ENCODE measurements at regions of chr2 and their contacts with region 1.

Region 1: GRCh38 chr2:54838585-54839035 is 115.1 kb downstream of the EML6 start:
- DNase-seq: peak; percentile 57
- CTCF ChIP-seq: peak; percentile 90

Region 2: DNA sequence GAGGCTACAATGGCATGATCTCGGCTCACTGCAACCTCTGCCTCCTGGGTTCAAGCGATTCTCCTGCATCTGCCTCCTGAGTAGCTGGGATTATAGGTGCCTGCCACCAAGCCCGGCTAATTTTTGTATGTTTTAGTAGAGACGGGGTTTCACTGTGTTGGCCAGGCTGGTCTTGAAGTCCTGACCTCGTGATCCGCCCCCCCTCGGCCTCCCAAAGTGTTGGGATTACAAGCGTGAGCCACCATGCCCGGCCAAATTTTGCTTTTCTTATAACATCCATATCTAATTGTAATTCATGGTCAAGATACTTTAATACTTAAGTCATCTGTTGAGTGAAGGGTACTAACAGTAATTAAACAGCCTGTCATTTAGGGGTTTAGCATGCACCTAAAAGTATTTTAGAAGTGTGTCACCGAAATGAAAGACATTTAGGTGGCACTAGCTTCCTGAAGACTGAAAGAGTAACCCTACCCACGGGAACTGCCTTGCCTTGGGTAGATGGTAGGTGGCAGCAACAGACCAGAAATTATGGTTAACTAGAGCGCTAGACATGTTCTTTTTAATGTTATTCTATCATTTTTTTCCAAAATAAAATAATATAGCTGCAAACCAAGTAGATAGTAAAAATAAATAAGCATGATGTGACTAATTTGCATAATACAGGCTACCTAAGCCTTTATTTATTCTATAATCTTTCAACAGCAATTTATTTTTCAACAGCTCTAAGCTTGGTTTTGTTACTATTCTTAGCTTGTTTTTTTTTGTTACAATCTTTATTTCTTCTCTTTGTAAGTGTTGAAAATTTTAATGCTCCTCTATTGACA is 731.8 kb before region 1 on chr2:
- CTCF ChIA-PET with region 1: interaction called, 10 read pairs
- POLR2A ChIA-PET with region 1: no interaction called
- DNase-seq: peak; percentile 42
- CTCF ChIP-seq: peak; percentile 66

Region 3: DNA sequence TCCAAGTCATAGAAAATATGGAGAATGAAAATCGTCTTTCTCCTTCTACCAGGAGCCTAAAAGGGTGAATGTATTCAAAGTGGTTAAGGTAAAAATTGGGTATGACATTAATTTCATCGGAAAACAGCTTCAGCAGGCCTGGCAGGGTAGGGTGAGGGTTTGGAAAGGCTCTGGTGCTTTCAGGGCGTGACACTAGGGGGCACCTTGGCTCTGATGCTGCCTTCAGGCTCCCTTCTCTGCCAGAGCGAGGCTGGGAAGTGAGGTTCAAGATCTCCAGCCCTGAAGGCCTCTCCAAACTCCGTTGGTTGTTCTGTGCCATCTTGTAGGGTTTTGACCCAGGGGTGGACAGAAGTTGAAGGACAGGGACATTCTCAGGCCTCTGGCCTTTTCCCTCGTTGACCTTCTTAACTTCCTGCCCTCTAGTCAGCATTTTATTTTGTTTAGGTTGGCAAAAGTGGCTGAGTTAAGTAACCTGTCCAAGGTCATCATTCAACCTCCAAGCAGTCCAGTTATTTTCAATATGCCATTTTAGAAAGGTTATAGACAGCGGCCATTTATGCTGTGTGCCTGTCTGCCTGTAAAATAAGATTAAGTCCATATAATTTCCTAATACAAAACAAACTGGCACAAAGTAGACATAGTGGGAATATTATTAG is 74.8 kb before region 1 on chr2:
- CTCF ChIA-PET with region 1: interaction called, 10 read pairs
- POLR2A ChIA-PET with region 1: no interaction called
- DNase-seq: peak; percentile 25
- CTCF ChIP-seq: peak; percentile 45

Region 4: GRCh38 chr2:54818226-54818625 is 20.4 kb before region 1 on chr2:
- CTCF ChIA-PET with region 1: interaction called, 78 read pairs
- POLR2A ChIA-PET with region 1: no interaction called
- DNase-seq: no peak
- CTCF ChIP-seq: no peak

Region 5: GRCh38 chr2:54899576-54900200 is 61.1 kb after region 1 on chr2:
- CTCF ChIA-PET with region 1: interaction called, 11 read pairs
- POLR2A ChIA-PET with region 1: no interaction called
- DNase-seq: peak; percentile 23
- CTCF ChIP-seq: peak; percentile 63

Region 6: DNA sequence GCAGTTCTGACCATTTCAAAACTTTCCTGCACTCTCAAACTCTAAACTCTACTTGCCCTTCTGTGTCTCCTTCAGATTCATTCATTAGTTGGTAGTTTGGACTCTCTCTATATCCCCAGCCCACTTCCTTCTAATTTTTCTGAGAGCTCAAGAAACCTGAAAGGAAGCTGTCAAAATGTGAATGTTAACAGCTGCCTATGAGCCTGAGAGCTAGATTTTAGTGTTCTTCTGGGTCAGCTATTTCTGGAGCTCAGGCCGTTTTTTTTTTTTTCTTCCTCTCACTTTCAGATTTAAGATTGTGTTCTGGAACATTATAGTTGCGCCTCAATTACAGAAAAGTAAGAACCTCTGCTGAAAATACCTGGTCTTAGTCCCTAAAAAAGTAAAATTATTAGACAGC is 138.5 kb after region 1 on chr2:
- CTCF ChIA-PET with region 1: no interaction called
- POLR2A ChIA-PET with region 1: no interaction called
- DNase-seq: no peak
- CTCF ChIP-seq: no peak